ENCODE measurements at regions of chr10 and their contacts with region 1.

Region 1: GRCh38 chr10:50431791-50432190 is 180.5 kb upstream of the ASAH2 start:
- DNase-seq: peak; percentile 57
- H3K4me3 Mint-ChIP-seq: peak overlapping the region; percentile 11
- H3K27ac Mint-ChIP-seq: peak overlapping the region; percentile 14
- H3K4me1 Mint-ChIP-seq: peaks cover 22% of the 10 kb centered on the region
- H3K27me3 Mint-ChIP-seq: no peaks in the 10 kb centered on the region

Region 2: DNA sequence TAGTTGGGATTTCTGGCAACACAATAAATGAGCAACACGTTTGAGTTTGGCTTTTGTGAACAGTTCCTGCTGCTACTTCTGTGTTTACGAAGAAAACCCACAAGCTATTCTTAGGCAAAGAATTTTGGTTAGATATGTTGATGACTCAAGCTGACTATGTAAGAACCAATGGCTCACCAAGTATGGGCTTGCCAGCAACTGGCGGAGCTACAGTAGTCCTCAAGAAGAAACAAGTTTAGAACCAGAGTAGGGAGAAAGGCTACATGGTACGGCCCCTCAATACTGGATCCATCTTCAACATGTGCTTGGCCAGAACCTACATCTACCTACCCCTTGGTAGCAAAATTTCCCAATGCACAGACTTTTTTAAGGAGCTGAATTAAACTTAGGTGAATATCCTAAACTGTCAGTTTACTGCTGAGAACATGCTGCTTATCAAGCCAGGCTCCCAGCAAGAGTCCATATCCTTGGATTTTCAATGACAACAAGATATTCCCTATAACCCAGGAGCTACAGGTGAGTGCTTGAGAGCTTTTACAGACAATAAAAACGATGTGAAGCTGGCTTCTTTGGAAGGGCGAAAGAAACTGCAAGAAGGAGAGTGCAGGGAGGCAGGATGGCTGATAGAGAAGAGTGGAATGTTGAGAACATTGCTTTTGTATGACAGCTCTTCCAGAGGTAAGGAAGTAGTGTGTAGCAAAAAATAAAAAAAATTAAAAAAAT is 106.2 kb before region 1 on chr10:
- intact Hi-C with region 1: loop called (anchors 5 kb)
- DNase-seq: peak; percentile 74
- H3K4me3 Mint-ChIP-seq: peak overlapping the region; percentile 57
- H3K27ac Mint-ChIP-seq: peak overlapping the region; percentile 39
- H3K4me1 Mint-ChIP-seq: peaks cover 47% of the 10 kb centered on the region
- H3K27me3 Mint-ChIP-seq: no peaks in the 10 kb centered on the region

Region 3: DNA sequence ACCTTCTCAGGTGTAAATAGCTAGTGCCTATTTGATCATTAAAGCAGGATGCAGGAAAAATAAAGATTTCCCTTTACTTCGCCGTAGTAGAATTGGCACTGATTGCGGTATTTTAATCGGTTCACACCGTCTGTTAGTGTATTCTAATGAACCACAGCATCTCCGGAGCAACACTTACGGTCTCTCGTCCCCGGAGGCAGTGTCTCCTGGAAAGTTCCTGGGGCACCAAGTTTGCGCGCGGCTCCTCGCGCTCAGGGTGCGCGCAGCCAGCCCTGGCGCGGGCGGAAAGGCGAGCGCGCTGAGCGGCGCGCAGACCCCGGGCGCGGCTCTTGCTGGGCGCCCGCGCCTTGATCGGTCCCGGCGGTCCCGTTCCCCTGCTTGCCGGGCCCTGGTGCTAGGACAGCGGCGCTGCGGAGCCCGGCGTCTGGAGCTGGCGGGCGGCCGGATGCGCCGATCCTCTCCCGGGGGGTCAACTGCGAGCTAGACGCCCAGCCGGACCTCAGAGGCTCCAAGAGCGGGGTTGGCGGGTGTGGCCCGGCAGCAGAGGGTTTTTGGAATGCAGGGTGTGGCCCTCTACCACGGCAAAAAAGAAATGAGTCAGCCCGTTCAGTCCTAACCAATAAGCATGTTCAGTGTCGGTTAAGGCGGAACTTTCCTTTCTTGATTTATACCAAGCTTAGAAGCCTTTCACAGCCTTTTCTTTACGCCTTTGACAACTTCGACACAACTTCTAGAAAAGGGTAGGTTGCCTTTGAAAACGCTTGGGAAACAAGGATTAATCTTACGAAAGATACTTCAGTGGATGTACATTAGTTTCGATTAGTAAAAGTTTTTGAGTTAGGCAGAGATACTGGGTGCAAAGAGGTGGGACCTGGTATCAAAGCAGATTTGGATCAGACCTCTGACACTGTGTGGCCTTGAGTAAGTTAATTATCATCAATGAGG is 13.6 kb before region 1 on chr10:
- intact Hi-C with region 1: loop called (anchors 2 kb)
- DNase-seq: peak; percentile 88
- H3K4me3 Mint-ChIP-seq: peak overlapping the region; percentile 86
- H3K27ac Mint-ChIP-seq: peak overlapping the region; percentile 82
- H3K4me1 Mint-ChIP-seq: peaks cover 45% of the 10 kb centered on the region
- H3K27me3 Mint-ChIP-seq: no peaks in the 10 kb centered on the region

Region 4: DNA sequence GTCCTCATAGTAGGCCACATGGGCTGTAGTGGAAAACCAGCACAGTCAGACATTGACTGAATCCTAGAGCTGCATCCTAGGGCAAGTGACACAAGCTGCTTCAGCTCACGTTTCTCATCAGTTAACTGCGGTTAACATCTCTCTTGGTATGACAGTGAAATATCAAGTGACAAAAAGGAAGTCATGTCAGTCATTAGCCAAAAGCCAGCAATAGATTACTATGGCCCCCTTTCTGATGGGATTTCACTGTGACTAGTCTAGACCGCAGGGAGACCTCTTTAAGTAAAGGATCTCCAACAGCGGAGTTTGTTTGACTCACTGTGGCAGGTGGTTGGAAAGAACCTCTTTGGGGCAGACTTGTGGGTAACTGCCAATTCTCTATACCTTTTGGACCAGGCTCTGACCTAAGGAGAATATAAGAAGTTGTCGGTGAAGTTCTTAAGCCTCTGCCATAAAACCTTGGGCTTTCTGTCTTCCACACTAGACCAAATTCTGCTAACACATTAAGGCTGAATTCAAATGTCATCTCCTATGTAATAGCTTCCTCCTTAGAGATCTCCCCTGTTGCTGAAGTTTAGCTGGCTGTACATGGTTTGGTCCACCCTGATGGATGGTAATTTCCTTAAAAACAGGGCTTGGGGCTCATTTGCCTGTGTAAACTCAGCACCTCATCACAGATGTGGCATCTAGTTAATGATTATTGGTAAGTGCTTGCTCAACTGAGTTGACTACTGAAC is 76.7 kb after region 1 on chr10:
- intact Hi-C with region 1: loop called (anchors 1 kb)
- DNase-seq: peak; percentile 75
- H3K4me3 Mint-ChIP-seq: no peak overlapping the region
- H3K27ac Mint-ChIP-seq: no peak overlapping the region
- H3K4me1 Mint-ChIP-seq: peaks cover 66% of the 10 kb centered on the region
- H3K27me3 Mint-ChIP-seq: no peaks in the 10 kb centered on the region

Region 5: GRCh38 chr10:50561816-50562215 is 130.0 kb after region 1 on chr10:
- intact Hi-C with region 1: no loop called
- DNase-seq: no peak
- H3K4me3 Mint-ChIP-seq: no peak overlapping the region
- H3K27ac Mint-ChIP-seq: no peak overlapping the region
- H3K4me1 Mint-ChIP-seq: peaks cover 4% of the 10 kb centered on the region
- H3K27me3 Mint-ChIP-seq: no peaks in the 10 kb centered on the region